ENCODE measurements at regions of chr16 and their contacts with region 1.

Region 1: GRCh38 chr16:56317998-56318826 is 107.1 kb downstream of the AMFR start:
- DNase-seq: peak; percentile 95

Region 2: DNA sequence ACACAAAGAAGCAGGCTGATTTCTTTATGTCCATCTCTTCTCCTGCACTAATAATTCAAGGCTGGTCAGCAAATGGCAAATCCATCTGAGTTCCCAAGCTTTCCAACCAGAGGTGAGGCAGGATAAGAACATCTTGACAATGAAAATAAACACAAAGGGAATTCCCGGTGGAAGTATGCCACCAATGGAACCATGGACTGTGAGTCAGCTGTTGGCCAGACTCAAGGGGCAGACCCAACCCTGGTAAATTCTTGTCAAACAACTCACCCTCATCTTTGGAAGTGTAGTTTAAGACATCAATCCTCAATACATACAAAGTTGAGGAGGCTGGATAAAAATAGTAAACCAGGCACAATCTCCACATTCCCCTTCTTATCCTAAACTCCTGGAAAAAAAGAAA is 368.7 kb before region 1 on chr16:
- intact Hi-C with region 1: loop called (anchors 2 to 5 kb)
- DNase-seq: no peak

Region 3: GRCh38 chr16:56075732-56076388 is 242.4 kb before region 1 on chr16:
- intact Hi-C with region 1: no loop called
- DNase-seq: no peak

Region 4: GRCh38 chr16:56547120-56547948 is 229.1 kb after region 1 on chr16:
- intact Hi-C with region 1: no loop called
- DNase-seq: no peak